AG04450 (cell line): ENCODE measurements at regions of chr14 and their contacts with region 1.

Region 1: GRCh38 chr14:59918824-59919569 is 947 bp upstream of the LRRC9 start:
- DNase-seq: no peak
- H3K4me3 ChIP-seq: peak overlapping the region; percentile 37
- H3K27ac ChIP-seq: no peak overlapping the region
- H3K27me3 ChIP-seq: peaks cover 12% of the 10 kb centered on the region
- CTCF ChIP-seq: peak; percentile 55

Region 2: DNA sequence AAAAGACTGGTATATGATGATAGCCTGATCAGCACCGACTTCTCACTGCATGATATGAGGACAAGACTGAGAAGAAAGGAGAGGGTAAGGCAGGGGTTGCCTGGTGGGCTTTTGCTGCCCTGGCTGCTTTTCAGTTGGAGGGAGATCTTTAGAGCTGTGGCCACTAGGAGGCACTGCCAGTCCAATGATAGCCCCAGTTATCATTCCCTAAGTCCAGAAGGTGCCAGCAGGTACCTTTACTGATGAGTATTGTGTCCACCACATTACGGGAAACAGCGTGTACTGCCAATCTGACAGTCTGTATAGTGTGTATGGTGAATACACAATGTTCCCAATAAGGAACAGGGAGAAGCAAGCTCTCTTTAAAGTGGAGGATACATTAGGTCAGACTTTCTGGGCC is 286.6 kb before region 1 on chr14:
- CTCF ChIA-PET with region 1: interaction called, 17 read pairs
- POLR2A ChIA-PET with region 1: no interaction called
- DNase-seq: no peak
- H3K4me3 ChIP-seq: no peak overlapping the region
- H3K27ac ChIP-seq: no peak overlapping the region
- H3K27me3 ChIP-seq: peaks cover 13% of the 10 kb centered on the region
- CTCF ChIP-seq: peak; percentile 63